Cardiac septum (tissue), 1 donor: ENCODE measurements at regions of chr9 and their contacts with region 1.

Region 1: DNA sequence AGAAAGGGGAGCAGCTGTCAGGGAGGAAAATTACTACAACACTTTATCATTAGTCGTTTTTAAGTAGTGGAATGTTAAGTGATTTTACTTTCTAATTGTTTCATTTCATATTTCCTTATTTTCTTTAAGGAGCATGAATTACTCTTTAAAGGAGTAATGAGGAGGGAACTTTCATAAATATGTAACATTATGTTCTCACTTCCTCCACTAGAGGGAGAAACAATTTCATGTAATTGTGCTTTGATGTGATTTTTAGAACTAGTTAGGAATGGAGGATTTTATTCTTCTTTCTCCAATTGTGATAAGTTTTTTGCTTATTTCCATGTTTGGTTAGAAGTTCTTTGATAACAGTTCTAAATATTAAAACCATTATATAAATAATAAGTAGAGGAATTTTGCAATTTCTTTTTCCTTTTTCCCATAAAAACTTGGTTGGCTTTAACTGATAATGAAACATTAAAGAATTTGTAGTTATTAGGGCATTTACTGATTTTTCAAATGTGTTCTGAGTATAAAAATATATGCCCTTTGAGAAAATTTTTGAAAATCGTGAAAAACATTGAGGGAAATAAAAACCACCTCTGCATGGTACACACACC is 25.6 kb downstream of the CEP78 start:
- DNase-seq: no peak

Region 2: DNA sequence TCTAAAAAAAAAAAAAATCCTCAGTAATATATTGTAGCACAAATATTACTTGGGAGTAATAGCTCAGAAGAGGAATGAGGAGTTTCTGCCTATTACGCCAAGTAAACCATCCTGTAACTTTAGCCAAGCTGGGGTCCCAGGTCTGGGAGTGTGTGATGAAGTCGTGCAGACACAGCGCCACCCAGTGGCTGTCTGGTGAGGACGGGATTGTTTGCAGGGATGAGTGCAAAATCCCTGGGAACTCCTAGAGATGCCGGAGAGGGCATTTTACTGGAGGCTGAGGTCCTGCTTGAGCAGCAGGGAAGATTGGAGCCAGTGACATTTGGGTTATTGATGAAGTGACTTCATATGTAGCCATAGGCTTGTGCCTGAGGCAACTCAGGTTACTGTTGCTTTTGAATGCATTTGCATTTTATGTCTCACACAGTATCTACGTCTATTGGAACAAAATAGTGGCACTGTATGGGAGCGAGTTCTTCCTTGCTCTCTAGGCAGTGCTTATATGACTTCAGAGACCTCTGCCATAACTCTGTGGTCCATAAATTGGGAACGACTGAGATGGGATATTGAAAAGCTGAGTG is 108.2 kb after region 1 on chr9:
- intact Hi-C with region 1: loop called (anchors 5 kb)
- DNase-seq: peak; percentile 77